HEK293 (cell line): ENCODE measurements at regions of chr1 and their contacts with region 1.

Region 1: DNA sequence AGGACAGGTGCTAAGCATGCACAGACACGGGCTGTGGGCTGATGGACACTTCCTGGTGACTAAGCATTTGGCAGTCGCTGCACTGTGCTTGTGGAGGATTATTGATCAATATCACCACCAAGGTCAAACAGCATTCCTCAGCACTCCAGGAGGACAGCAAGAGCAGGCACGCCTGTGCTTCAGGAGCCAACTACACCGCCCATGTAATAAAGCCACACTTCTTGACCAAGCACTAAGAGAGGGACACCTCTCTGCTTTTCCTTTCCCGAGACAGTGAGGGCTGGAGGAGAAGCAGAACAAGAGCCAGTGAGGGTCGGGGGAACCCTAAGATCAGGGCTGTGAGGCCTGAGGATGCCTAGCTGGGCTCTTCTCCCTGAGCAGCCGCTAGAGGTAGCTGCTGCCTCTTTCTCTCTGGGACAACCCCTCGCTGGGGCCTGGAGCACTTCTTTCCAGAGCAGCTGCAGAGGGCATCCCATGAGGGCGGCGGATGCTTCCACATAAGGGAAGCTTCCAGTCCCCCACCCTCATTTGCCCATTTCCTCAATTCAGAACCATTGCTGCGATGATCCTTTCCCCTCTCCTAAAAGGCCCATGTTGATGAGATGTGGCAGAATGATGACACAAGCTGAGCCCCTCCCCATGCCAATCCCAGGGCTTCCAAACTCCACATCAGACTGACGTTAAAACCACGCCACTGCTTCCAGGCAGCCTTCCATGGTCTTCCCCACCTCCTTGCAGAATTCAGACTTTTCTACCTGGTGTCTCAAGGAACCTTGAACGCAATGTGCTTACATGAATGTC is 19.1 kb downstream of the RAB7B start:
- H3K4me3 ChIP-seq: no peak overlapping the region
- H3K27ac ChIP-seq: no peak overlapping the region
- H3K4me1 ChIP-seq: no peaks in the 10 kb centered on the region
- CTCF ChIP-seq: peak; percentile 51; the same call in 1 of the 2 replicates

Region 2: DNA sequence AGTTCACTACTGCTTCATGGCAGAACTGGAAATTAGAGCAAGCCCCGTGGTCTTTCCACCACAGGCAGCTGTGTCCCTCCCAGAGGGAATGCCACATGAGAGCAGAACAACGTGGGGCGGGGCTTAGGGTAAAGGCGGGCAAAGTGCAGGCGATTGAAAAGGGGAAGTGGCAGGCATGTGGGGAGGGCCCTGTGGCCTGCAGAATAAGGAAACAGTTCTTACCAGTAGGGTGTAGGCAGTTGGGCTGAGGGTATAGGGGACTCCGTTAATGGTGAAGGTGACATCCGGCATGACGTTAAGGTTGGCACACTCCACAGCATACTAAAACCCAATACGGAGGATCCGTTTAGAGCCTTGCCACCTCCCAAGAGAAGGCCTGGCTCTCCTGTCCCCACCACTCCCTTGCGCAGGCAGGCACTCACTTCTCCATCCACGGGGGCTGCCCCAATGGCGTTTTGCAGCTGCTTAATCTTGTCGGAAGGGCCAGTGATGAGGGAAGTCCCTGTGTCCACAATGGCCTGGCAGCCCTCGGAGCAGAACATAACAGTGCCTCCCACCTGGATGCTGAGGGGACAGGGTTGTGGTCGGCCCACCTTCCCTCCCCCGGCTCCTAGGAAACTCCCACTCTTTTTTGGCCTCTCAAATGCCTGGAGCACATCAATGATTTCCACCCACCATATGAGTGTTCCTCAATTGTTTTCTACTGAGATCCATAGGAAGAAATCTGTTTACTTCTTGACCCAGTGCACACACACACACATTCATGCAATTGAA is 28.1 kb after region 1 on chr1:
- CTCF ChIA-PET with region 1: no interaction called
- POLR2A ChIA-PET with region 1: no interaction called
- H3K4me3 ChIP-seq: no peak overlapping the region
- H3K27ac ChIP-seq: no peak overlapping the region
- H3K4me1 ChIP-seq: no peaks in the 10 kb centered on the region
- CTCF ChIP-seq: no peak

Region 3: GRCh38 chr1:206050655-206051235 is 66.6 kb after region 1 on chr1:
- CTCF ChIA-PET with region 1: no interaction called
- POLR2A ChIA-PET with region 1: no interaction called
- H3K4me3 ChIP-seq: no peak overlapping the region
- H3K27ac ChIP-seq: no peak overlapping the region
- H3K4me1 ChIP-seq: no peaks in the 10 kb centered on the region
- CTCF ChIP-seq: no peak

Region 4: DNA sequence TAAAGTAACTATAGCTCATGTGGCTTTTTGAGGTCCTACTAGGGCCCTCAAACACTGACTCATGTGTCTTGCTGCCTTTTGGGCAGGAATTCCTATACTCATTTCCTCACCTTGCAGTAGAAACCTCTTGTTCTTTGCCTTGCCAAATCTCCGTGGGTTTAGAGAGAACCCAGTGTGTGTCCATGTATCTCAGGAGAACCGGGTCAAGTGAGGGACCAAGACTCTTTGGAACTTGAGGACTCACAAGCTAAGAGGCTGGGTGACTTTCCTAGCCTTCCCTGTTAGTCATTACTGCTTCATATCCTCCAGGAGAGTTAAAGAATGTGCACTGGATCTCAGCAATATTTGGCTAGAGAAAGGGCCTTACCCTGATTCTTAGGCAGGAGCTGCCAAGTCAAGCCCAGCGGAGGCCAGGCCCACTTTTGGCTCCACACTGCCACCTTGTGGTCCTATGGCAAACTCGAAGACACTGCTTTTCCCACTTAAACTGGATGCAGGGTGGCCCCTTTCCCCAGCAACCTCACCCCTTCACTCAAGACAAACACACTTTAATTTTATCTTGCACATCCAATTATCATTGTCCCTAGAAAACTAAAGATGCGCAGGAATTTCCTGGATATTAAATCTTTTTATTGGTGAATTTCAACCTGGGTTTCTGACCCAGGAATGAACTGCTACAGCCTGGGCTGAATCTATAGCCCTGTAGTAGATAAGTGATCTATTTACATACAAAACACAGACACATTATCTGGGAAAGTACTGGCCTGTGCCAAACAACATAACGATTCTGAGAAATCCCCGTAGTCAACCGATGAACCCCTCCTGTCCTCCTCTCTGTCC is 122.4 kb after region 1 on chr1:
- CTCF ChIA-PET with region 1: interaction called, 151 read pairs
- POLR2A ChIA-PET with region 1: no interaction called
- H3K4me3 ChIP-seq: no peak overlapping the region
- H3K27ac ChIP-seq: no peak overlapping the region
- H3K4me1 ChIP-seq: no peaks in the 10 kb centered on the region
- CTCF ChIP-seq: peak; percentile 81